ENCODE measurements at regions of chr15 and their contacts with region 1.

Region 1: DNA sequence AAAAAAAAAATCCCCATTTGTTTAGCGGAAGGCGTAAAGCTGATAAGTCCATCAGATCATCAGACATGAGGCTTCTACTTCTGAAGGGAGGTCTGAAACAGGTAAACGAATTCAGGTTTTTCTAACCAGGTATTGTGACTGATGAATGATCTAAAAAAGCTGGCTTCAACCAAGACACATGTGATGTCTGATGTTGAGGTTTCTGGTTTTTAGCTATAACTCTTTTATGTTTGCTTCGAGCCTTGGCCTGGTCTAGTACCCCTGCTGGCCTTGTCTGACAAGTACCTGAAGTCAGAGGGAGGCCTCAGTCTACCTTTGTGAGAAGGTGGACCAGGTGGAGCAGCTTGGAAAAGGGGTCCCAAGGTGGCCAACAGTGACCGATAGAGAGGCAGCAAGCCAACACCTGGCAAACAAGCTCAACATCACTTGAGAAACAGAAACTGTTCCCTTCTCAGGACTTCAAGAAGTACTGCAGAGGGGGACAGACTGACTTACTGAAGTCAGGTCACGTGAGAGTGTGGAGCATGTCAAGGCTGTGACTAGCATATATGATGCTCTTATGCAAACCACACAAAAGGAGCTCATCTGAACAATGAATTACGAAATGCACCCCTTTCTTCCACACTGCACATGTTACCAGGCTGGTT is 33.0 kb upstream of the CA12 start:
- DNase-seq: no peak
- ATAC-seq: no peak
- H3K4me3 ChIP-seq: no peak overlapping the region
- H3K27ac ChIP-seq: no peak overlapping the region
- H3K4me1 ChIP-seq: no peaks in the 10 kb centered on the region
- H3K27me3 ChIP-seq: no peaks in the 10 kb centered on the region
- CTCF ChIP-seq: no peak
- POLR2A ChIP-seq: no peak

Region 2: GRCh38 chr15:63166219-63166618 is 248.4 kb before region 1 on chr15:
- intact Hi-C with region 1: loop called in 3 of 10 experiments (anchors 10 kb)
- DNase-seq: no peak
- ATAC-seq: no peak
- H3K4me3 ChIP-seq: no peak overlapping the region
- H3K27ac ChIP-seq: no peak overlapping the region
- H3K4me1 ChIP-seq: no peaks in the 10 kb centered on the region
- H3K27me3 ChIP-seq: no peaks in the 10 kb centered on the region
- CTCF ChIP-seq: peak in 3 of 12 donors; percentile 8 to 19 (median 13)
- POLR2A ChIP-seq: no peak

Region 3: DNA sequence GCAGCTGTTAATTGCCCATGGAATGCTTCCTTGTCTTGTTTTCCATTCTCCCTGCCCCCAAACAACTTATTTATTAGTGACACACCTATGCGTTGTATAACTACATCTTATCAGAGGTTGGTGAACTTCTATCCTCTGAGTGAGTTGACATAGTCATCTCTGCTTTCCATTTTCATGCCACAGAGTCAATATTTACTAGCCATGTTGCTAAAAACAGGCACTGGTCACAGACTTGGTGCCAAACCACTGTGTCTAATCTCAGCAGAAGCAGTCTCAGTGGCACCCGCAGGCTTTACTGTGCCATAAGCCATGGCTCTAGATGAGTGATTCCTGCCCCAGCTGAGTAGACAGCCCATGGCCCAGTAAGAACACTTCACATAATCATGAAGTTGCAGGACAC is 605.2 kb after region 1 on chr15:
- intact Hi-C with region 1: no loop called
- DNase-seq: peak in 4 of 5 donors; percentile 49 to 84 (median 66)
- ATAC-seq: peak; percentile 78 to 87 (median 86)
- H3K4me3 ChIP-seq: no peak overlapping the region
- H3K27ac ChIP-seq: peak overlapping the region; percentile 38 to 80 (median 68)
- H3K4me1 ChIP-seq: peaks cover 0 to 84% (median 24%) of the 10 kb centered on the region in 12 donors
- H3K27me3 ChIP-seq: no peaks in the 10 kb centered on the region
- CTCF ChIP-seq: no peak
- POLR2A ChIP-seq: no peak

Measured in heart left ventricle (tissue), 16 donors.